ENCODE measurements at regions of chr6 and their contacts with region 1.

Region 1: GRCh38 chr6:11172501-11173332 is 59.8 kb downstream of the NEDD9 start:
- DNase-seq: peak; percentile 80
- H3K4me3 Mint-ChIP-seq: no peak overlapping the region
- H3K27ac Mint-ChIP-seq: no peak overlapping the region
- H3K4me1 Mint-ChIP-seq: peaks cover 13% of the 10 kb centered on the region
- H3K27me3 Mint-ChIP-seq: peaks cover 3% of the 10 kb centered on the region

Region 2: DNA sequence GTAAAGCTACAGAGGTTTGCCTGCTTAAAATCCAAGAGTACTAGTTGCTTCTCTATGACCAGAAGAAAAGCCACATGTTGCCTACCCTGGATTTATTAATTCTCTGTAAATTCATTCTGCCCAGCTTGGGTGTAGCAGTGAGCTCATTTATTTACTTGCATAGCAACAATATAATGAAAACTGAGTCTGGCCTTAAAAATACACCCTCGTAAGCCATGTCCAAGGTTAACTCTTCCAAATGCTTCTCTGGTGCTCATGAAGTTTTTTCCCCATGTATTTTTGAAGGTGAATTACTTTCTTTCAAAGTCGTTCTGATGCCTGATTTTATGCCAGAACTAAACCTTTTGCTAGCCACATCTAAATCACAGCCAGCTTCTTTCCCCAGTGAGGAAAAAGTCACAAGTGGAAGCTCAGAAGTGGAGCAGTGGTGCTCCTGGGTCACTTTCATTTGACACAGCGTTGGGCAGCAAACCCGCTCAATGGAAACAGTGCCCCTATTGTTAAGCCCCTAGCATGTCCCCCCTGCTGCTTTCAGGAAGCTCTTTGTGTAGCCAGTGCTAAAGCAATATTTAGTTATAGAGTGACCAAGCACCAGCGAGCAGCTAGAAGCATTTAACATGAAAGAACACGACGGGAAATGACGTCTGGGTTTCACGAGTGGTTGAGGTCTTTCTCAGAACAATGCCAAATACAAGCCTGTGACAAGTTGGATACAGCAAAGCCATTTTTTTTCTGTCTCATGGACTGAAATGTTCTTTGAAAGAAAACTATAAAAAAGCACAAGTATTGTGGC is 30.0 kb after region 1 on chr6:
- CTCF ChIA-PET with region 1: interaction called, 10 read pairs
- DNase-seq: peak; percentile 68
- H3K4me3 Mint-ChIP-seq: peak overlapping the region; percentile 17
- H3K27ac Mint-ChIP-seq: peak overlapping the region; percentile 97
- H3K4me1 Mint-ChIP-seq: peaks cover 81% of the 10 kb centered on the region
- H3K27me3 Mint-ChIP-seq: no peaks in the 10 kb centered on the region

Region 3: DNA sequence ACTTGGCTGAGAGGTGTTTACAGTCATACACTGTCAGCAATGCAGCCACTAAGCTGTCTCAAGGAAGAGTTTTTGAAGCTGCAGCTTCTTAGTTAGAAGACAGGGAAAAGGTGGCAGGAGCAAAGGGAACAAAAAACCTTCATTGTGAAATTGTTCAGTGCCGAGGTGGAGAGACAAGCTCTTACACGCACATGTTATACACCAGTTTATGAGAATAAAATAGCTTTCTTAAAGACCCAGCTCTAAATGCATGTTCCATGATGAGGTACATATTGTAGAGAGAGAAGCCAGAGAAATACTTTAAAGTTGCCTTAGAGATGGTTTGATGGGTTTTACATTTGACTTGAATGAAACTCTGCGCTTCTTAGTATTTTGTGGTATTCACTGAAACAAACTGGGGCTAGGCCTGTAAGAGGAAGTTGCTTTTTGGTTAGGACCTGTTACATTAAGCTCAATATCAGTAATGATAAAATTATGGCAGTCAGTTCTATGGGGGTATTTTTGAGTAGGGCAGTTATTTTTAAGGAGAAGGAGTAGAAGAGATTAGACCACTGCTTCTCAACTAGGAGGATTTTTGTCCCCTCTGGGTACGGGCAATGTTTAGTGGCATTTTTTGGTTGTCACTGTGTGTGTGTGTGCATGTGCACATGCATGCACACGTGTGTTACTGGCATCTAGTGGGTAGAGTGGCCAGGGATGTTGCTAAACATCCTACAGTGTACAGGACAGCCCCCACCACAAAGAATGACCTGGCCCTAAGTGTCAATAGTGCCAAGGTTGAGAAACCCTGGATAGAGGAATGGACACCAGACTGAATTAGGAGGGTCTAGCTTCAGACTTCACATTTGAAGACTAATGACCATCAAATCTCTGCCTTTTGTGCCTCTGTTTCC is 49.9 kb after region 1 on chr6:
- CTCF ChIA-PET with region 1: interaction called, 14 read pairs
- DNase-seq: no peak
- H3K4me3 Mint-ChIP-seq: peak overlapping the region; percentile 32
- H3K27ac Mint-ChIP-seq: peak overlapping the region; percentile 94
- H3K4me1 Mint-ChIP-seq: peaks cover 74% of the 10 kb centered on the region
- H3K27me3 Mint-ChIP-seq: no peaks in the 10 kb centered on the region

Measured in activated naive CD4-positive, alpha-beta T cell treated with anti-CD3 and anti-CD28 coated beads, Interleukin-2, amount 10 ng/mL, durations not matched to agents 7 days and 5 days (primary cell).